HCT116 (cell line): ENCODE measurements at regions of chr2 and their contacts with region 1.

Region 1: DNA sequence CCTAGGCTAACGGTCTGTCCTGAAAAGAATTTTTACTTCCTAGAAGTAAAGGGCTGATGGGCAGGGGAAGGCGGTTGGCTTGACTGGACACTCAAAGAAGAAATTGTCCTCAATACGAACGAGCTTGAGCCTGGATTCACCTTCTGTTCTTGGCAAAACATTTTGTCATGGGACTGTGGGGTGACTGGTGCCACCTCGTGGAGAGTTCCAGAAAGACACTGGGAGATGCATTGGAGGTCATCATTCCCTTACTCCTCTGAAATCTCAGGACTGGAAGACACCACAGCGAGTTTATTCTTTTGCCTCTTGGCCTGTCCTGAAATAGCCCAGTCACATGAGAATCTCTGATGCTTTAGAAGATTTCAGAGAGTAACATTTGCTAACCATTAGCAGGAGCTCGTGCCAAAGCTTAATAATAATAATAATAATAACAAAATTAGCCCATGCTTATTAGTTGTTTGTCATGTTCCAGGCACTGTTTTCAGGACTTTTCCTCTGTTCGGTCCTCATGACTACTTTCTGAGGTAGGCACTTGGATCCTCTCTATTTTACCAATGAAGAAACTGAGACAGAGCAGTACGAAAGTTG is 44.5 kb downstream of the TMEM182 start:
- DNase-seq: peak; percentile 37
- ATAC-seq: peak; percentile 86
- H3K4me3 ChIP-seq: no peak overlapping the region
- H3K27ac ChIP-seq: no peak overlapping the region
- H3K4me1 ChIP-seq: no peaks in the 10 kb centered on the region
- H3K27me3 ChIP-seq: no peaks in the 10 kb centered on the region
- CTCF ChIP-seq: peak; percentile 55 to 87 (median 82); a peak in 5 of 6 replicates
- POLR2A ChIP-seq: no peak
- RAD21 ChIP-seq: peak; percentile 61

Region 2: GRCh38 chr2:102520028-102520427 is 286.3 kb before region 1 on chr2:
- CTCF ChIA-PET with region 1: interaction called, 3 read pairs
- POLR2A ChIA-PET with region 1: no interaction called
- RAD21 ChIA-PET with region 1: no interaction called
- intact Hi-C with region 1: loop called (anchors 2 kb)
- DNase-seq: peak; percentile 36
- ATAC-seq: peak; percentile 94
- H3K4me3 ChIP-seq: no peak overlapping the region
- H3K27ac ChIP-seq: no peak overlapping the region
- H3K4me1 ChIP-seq: no peaks in the 10 kb centered on the region
- H3K27me3 ChIP-seq: no peaks in the 10 kb centered on the region
- CTCF ChIP-seq: peak; percentile 57 to 87 (median 75); a peak in 5 of 6 replicates
- POLR2A ChIP-seq: no peak
- RAD21 ChIP-seq: peak; percentile 70

Region 3: GRCh38 chr2:102615622-102616436 is 190.5 kb before region 1 on chr2:
- CTCF ChIA-PET with region 1: no interaction called
- POLR2A ChIA-PET with region 1: no interaction called
- RAD21 ChIA-PET with region 1: no interaction called
- intact Hi-C with region 1: loop called (anchors 10 kb)
- DNase-seq: peak; percentile 35
- ATAC-seq: peak; percentile 78
- H3K4me3 ChIP-seq: no peak overlapping the region
- H3K27ac ChIP-seq: no peak overlapping the region
- H3K4me1 ChIP-seq: peaks cover 8 to 15% of the 10 kb centered on the region in 2 experiments; a peak in 2 of 4 replicates
- H3K27me3 ChIP-seq: no peaks in the 10 kb centered on the region
- CTCF ChIP-seq: peak; percentile 81 to 97 (median 92)
- POLR2A ChIP-seq: no peak
- RAD21 ChIP-seq: peak; percentile 75

Region 4: GRCh38 chr2:102753563-102754159 is 52.7 kb before region 1 on chr2:
- CTCF ChIA-PET with region 1: interaction called, 27 read pairs
- POLR2A ChIA-PET with region 1: no interaction called
- RAD21 ChIA-PET with region 1: no interaction called
- intact Hi-C with region 1: loop called (anchors 2 kb)
- DNase-seq: peak; percentile 32
- ATAC-seq: peak; percentile 62
- H3K4me3 ChIP-seq: no peak overlapping the region
- H3K27ac ChIP-seq: no peak overlapping the region
- H3K4me1 ChIP-seq: no peaks in the 10 kb centered on the region
- H3K27me3 ChIP-seq: no peaks in the 10 kb centered on the region
- CTCF ChIP-seq: peak; percentile 40 to 84 (median 66); a peak in 5 of 6 replicates
- POLR2A ChIP-seq: no peak
- RAD21 ChIP-seq: 0 out of 2 replicates have a peak, but pooled peaks have one; percentile 24

Region 5: DNA sequence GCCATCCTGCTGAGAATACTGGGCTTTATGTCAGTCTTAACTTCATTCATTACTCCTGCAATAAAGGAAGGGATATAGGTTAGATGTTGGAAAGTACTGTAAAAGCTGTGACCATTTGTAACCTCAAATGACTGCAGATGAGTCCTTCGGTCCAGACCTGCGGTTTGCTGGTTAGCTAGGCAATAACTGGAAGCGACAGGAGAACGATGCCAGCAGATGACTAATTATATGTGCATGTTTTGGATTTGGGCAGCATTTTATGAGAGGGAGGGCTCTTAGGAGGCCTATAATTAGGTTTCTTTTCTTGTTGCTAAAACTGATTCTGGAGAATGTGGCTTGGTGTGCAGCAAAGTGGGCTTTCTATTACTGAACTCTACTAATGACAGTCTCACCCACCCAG is 161.1 kb after region 1 on chr2:
- CTCF ChIA-PET with region 1: no interaction called
- POLR2A ChIA-PET with region 1: no interaction called
- RAD21 ChIA-PET with region 1: no interaction called
- intact Hi-C with region 1: no loop called
- DNase-seq: no peak
- ATAC-seq: no peak
- H3K4me3 ChIP-seq: no peak overlapping the region
- H3K27ac ChIP-seq: no peak overlapping the region
- H3K4me1 ChIP-seq: no peaks in the 10 kb centered on the region
- H3K27me3 ChIP-seq: no peaks in the 10 kb centered on the region
- CTCF ChIP-seq: no peak
- POLR2A ChIP-seq: no peak
- RAD21 ChIP-seq: no peak